Right cardiac atrium (tissue), 5 donors: ENCODE measurements at regions of chrX and their contacts with region 1.

Region 1: GRCh38 chrX:130079824-130080406 is 30.4 kb downstream of the ELF4 start:
- DNase-seq: peak in 2 of 3 donors; percentile 41 to 69
- ATAC-seq: peak; percentile 39 to 48
- H3K4me3 ChIP-seq: no peak overlapping the region
- H3K27ac ChIP-seq: no peak overlapping the region
- H3K4me1 ChIP-seq: peaks cover 4% of the 10 kb centered on the region
- H3K27me3 ChIP-seq: no peaks in the 10 kb centered on the region

Region 2: GRCh38 chrX:130139474-130140201 is 59.7 kb after region 1 on chrX:
- intact Hi-C with region 1: loop called in 1 of 4 experiments (anchors 10 kb)
- DNase-seq: no peak
- ATAC-seq: peak in 1 of 2 donors; percentile 34
- H3K4me3 ChIP-seq: no peak overlapping the region
- H3K27ac ChIP-seq: no peak overlapping the region
- H3K4me1 ChIP-seq: no peaks in the 10 kb centered on the region
- H3K27me3 ChIP-seq: no peaks in the 10 kb centered on the region

Region 3: GRCh38 chrX:130190801-130191200 is 110.9 kb after region 1 on chrX:
- intact Hi-C with region 1: loop called (anchors 5 kb)
- DNase-seq: no peak
- ATAC-seq: no peak
- H3K4me3 ChIP-seq: no peak overlapping the region
- H3K27ac ChIP-seq: no peak overlapping the region
- H3K4me1 ChIP-seq: no peaks in the 10 kb centered on the region
- H3K27me3 ChIP-seq: no peaks in the 10 kb centered on the region